ENCODE measurements at regions of chr2 and their contacts with region 1.

Region 1: GRCh38 chr2:24971536-24972314 is at the start of gene DNAJC27:
- DNase-seq: peak; percentile 96
- ATAC-seq: peak; percentile 90
- H3K4me3 Mint-ChIP-seq: peak within 1 kb of the TSS; percentile 96
- H3K27ac Mint-ChIP-seq: peak within 1 kb of the TSS; percentile 100
- H3K4me1 Mint-ChIP-seq: peaks cover 21% of the 10 kb centered on the region
- H3K27me3 Mint-ChIP-seq: no peaks in the 10 kb centered on the region
- CTCF ChIP-seq: no peak
- total RNA-seq, gene DNAJC27: 9.0 and 9.7 TPM in 2 replicates

Region 2: DNA sequence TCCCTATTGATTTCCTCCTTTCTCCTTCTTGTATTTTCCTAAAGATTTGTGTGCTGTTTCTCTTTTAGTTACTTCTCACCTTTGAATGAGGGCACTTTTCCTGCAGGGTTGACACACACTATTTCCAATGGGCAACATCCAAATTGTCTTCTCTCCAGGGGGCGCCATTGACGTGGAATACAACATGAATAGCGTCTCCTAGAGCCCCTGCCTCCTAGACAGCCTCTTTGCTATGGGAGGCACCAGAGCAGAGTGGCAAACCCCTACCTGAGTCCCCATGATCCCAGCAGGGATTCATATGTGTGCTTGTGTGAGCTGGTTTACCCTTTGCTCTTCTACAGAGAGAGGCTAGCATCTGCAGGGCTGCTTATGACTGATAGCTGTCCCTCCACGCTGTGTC is 550.1 kb before region 1 on chr2:
- CTCF ChIA-PET with region 1: no interaction called
- POLR2A ChIA-PET with region 1: no interaction called
- intact Hi-C with region 1: loop called (anchors 5 kb)
- DNase-seq: peak; percentile 26
- ATAC-seq: peak; percentile 65
- H3K4me3 Mint-ChIP-seq: no peak overlapping the region
- H3K27ac Mint-ChIP-seq: no peak overlapping the region
- H3K4me1 Mint-ChIP-seq: no peaks in the 10 kb centered on the region
- H3K27me3 Mint-ChIP-seq: peaks cover 2% of the 10 kb centered on the region
- CTCF ChIP-seq: no peak

Region 3: GRCh38 chr2:24850944-24851343 is 120.8 kb before region 1 on chr2:
- CTCF ChIA-PET with region 1: no interaction called
- POLR2A ChIA-PET with region 1: interaction called, 10 read pairs
- intact Hi-C with region 1: no loop called
- DNase-seq: no peak
- ATAC-seq: no peak
- H3K4me3 Mint-ChIP-seq: no peak overlapping the region
- H3K27ac Mint-ChIP-seq: no peak overlapping the region
- H3K4me1 Mint-ChIP-seq: no peaks in the 10 kb centered on the region
- H3K27me3 Mint-ChIP-seq: no peaks in the 10 kb centered on the region
- CTCF ChIP-seq: no peak

Region 4: GRCh38 chr2:25000503-25001324 is 29.0 kb after region 1 on chr2:
- CTCF ChIA-PET with region 1: no interaction called
- POLR2A ChIA-PET with region 1: no interaction called
- intact Hi-C with region 1: no loop called
- DNase-seq: no peak
- ATAC-seq: no peak
- H3K4me3 Mint-ChIP-seq: no peak overlapping the region
- H3K27ac Mint-ChIP-seq: no peak overlapping the region
- H3K4me1 Mint-ChIP-seq: no peaks in the 10 kb centered on the region
- H3K27me3 Mint-ChIP-seq: peaks cover 16% of the 10 kb centered on the region
- CTCF ChIP-seq: no peak

Region 5: GRCh38 chr2:25041928-25042320 is 70.2 kb after region 1 on chr2 and contains the start of gene EFR3B:
- CTCF ChIA-PET with region 1: no interaction called
- POLR2A ChIA-PET with region 1: no interaction called
- intact Hi-C with region 1: loop called (anchors 1 kb)
- DNase-seq: peak; percentile 84
- ATAC-seq: peak; percentile 99
- H3K4me3 Mint-ChIP-seq: peak within 1 kb of the TSS; percentile 84
- H3K27ac Mint-ChIP-seq: no peak within 1 kb of the TSS
- H3K4me1 Mint-ChIP-seq: peaks cover 27% of the 10 kb centered on the region
- H3K27me3 Mint-ChIP-seq: peaks cover 42% of the 10 kb centered on the region
- CTCF ChIP-seq: no peak
- total RNA-seq, gene EFR3B: 0.07 and 0.10 TPM in 2 replicates

Region 6: DNA sequence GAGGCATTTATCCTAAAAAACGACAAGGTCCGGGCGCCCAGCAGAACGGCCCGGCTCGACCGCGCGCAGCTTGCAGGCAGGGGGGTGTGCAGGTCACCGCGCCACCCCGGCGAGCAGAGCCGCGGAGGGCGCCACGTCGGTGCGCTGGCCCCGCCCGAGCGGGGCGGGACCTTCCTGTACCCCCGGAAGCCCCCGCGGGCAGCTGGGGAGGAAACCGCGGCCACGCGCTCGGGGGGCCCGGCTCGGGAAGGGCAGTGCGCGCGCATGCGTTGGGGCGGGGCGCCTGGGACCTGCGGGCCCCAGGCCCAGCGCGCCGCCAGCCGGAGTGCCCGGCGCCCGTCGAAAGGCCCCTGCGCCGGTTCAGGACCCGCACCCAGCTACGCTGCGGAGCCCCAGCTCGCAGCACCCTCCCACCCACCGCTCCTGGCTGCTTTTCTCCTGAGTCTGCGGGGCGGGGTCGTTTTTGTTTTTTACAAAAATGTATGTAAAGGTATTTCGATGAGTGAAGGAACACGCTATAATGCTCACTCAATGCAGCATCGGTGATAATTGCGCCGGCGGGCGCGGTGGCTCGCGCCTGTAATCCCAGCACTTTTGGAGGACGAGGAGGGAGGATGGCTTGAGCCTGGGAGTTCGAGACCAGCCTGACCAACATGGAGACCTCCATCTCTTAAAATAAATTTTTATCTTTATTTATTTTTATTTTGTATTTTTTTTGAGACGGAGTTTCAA is 244.4 kb after region 1 on chr2:
- CTCF ChIA-PET with region 1: no interaction called
- POLR2A ChIA-PET with region 1: no interaction called
- intact Hi-C with region 1: loop called (anchors 5 kb)
- DNase-seq: peak; percentile 85
- ATAC-seq: peak; percentile 94
- H3K4me3 Mint-ChIP-seq: peak overlapping the region; percentile 72
- H3K27ac Mint-ChIP-seq: peak overlapping the region; percentile 32
- H3K4me1 Mint-ChIP-seq: peaks cover 21% of the 10 kb centered on the region
- H3K27me3 Mint-ChIP-seq: no peaks in the 10 kb centered on the region
- CTCF ChIP-seq: no peak

Region 7: DNA sequence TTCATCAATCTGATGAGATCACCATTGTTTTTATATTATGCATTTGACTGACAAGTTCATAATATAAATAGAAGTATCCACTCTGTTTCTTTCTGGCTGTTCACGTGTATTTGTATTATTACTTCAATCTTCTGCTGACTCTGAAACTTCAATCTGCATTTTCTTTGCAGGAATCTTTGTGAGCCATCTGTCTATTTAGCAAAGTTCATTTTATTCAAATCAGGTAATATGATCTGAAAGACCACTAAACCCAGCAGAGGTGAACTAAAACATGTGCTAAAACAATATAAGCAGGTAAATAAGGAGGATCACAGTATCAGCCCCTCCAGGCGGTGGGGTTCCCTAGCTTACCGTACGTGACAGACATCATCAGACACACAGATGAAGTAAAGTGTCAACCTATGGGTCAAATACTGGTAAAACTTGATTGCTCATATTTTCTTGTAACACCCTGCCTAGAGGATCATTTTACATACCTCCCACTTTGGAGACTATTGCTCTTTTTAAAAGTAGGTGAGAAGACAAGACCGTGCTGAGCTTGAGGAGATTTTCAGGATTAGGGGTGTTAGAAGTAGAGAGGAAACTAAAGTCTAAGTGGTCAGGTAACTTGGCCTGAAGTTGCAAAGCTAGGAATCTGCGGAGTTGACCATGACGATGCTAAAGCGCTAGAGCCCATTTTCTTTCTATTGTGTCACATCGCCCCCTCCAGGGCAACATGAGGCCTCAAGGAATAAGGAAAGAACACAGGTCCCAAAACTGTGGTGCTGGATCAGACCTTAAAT is 692.6 kb after region 1 on chr2:
- CTCF ChIA-PET with region 1: interaction called, 5 read pairs
- POLR2A ChIA-PET with region 1: no interaction called
- intact Hi-C with region 1: loop called (anchors 2 kb)
- DNase-seq: no peak
- ATAC-seq: peak; percentile 42
- H3K4me3 Mint-ChIP-seq: peak overlapping the region; percentile 20
- H3K27ac Mint-ChIP-seq: no peak overlapping the region
- H3K4me1 Mint-ChIP-seq: peaks cover 7% of the 10 kb centered on the region
- H3K27me3 Mint-ChIP-seq: no peaks in the 10 kb centered on the region
- CTCF ChIP-seq: no peak

Region 8: GRCh38 chr2:26033818-26034636 is 1062.3 kb after region 1 on chr2 and contains the start of gene RAB10:
- CTCF ChIA-PET with region 1: no interaction called
- POLR2A ChIA-PET with region 1: no interaction called
- intact Hi-C with region 1: loop called (anchors 2 kb)
- DNase-seq: peak; percentile 99
- ATAC-seq: peak; percentile 94
- H3K4me3 Mint-ChIP-seq: peak within 1 kb of the TSS; percentile 90
- H3K27ac Mint-ChIP-seq: peak within 1 kb of the TSS; percentile 92
- H3K4me1 Mint-ChIP-seq: peaks cover 39% of the 10 kb centered on the region
- H3K27me3 Mint-ChIP-seq: no peaks in the 10 kb centered on the region
- CTCF ChIP-seq: no peak
- total RNA-seq, gene RAB10: 79.3 and 94.6 TPM in 2 replicates